Natural killer cell (primary cell): ENCODE measurements at regions of chr20 and their contacts with region 1.

Region 1: GRCh38 chr20:37534401-37535157 is 6.9 kb upstream of the BLCAP start:
- DNase-seq: peak in 1 of 2 donors; percentile 86
- ATAC-seq: peak; percentile 96 to 98 (median 98)
- H3K4me3 ChIP-seq: no peak overlapping the region
- H3K4me3 Mint-ChIP-seq: no peak overlapping the region
- H3K27ac ChIP-seq: no peak overlapping the region
- H3K27ac Mint-ChIP-seq: no peak overlapping the region
- H3K4me1 ChIP-seq: peaks cover 2% of the 10 kb centered on the region
- H3K4me1 Mint-ChIP-seq: peaks cover 6% of the 10 kb centered on the region in 2 donors
- H3K27me3 ChIP-seq: no peaks in the 10 kb centered on the region
- H3K27me3 Mint-ChIP-seq: peaks cover 10 to 12% of the 10 kb centered on the region in 2 donors
- CTCF ChIP-seq: peak; percentile 77

Region 2: GRCh38 chr20:37007898-37008649 is 526.5 kb before region 1 on chr20:
- intact Hi-C with region 1: loop called (anchors 5 kb)
- DNase-seq: peak; percentile 22 to 80
- ATAC-seq: peak; percentile 97 to 99 (median 99)
- H3K4me3 ChIP-seq: no peak overlapping the region
- H3K4me3 Mint-ChIP-seq: no peak overlapping the region
- H3K27ac ChIP-seq: peak overlapping the region; percentile 40
- H3K27ac Mint-ChIP-seq: peak overlapping the region; percentile 82 to 83
- H3K4me1 ChIP-seq: peaks cover 11% of the 10 kb centered on the region
- H3K4me1 Mint-ChIP-seq: peaks cover 8 to 9% of the 10 kb centered on the region in 2 donors
- H3K27me3 ChIP-seq: no peaks in the 10 kb centered on the region
- H3K27me3 Mint-ChIP-seq: no peaks in the 10 kb centered on the region
- CTCF ChIP-seq: peak; percentile 63

Region 3: GRCh38 chr20:37194621-37195417 is 339.8 kb before region 1 on chr20:
- intact Hi-C with region 1: loop called (anchors 1 kb)
- DNase-seq: peak in 1 of 2 donors; percentile 55
- ATAC-seq: no peak
- H3K4me3 ChIP-seq: no peak overlapping the region
- H3K4me3 Mint-ChIP-seq: no peak overlapping the region
- H3K27ac ChIP-seq: no peak overlapping the region
- H3K27ac Mint-ChIP-seq: peak overlapping the region; percentile 13 to 54
- H3K4me1 ChIP-seq: peaks cover 29% of the 10 kb centered on the region
- H3K4me1 Mint-ChIP-seq: peaks cover 61 to 64% of the 10 kb centered on the region in 2 donors
- H3K27me3 ChIP-seq: no peaks in the 10 kb centered on the region
- H3K27me3 Mint-ChIP-seq: no peaks in the 10 kb centered on the region
- CTCF ChIP-seq: no peak

Region 4: DNA sequence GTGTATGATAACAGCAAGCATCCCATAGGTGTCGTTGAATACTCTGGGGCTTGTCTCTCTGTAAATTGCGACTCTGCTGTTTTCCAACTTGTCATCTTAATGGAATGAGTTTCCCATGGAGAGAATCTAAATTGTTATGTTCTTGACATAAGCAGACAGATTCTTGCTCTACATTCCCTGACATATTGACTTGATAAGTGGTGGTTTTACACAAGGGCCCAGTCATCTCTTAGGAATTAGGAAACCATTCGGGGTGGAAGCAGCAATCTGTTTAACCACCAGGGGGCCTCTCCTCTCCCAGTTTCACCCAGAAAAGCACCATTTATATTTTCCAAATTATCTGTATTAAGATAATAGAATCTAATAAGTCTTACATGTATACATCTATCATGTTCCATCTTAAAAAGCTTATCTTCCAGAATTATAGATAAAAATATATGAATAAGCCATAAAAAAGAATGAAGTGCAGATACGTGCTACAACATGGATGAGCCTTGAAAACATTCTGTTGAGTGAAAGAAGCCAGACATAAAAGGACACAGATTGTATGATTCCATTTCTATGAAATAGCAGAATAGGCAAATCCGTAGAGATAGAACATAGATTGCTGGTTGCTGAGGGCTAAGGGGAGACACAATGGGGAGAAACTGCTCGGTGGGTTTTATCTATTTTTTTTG is 332.2 kb before region 1 on chr20:
- intact Hi-C with region 1: loop called (anchors 1 kb)
- DNase-seq: peak in 1 of 2 donors; percentile 59
- ATAC-seq: peak in 1 of 3 donors; percentile 59
- H3K4me3 ChIP-seq: no peak overlapping the region
- H3K4me3 Mint-ChIP-seq: no peak overlapping the region
- H3K27ac ChIP-seq: no peak overlapping the region
- H3K27ac Mint-ChIP-seq: no peak overlapping the region
- H3K4me1 ChIP-seq: no peaks in the 10 kb centered on the region
- H3K4me1 Mint-ChIP-seq: no peaks in the 10 kb centered on the region
- H3K27me3 ChIP-seq: no peaks in the 10 kb centered on the region
- H3K27me3 Mint-ChIP-seq: no peaks in the 10 kb centered on the region
- CTCF ChIP-seq: peak; percentile 68

Region 5: GRCh38 chr20:37270576-37271420 is 263.8 kb before region 1 on chr20:
- intact Hi-C with region 1: loop called (anchors 1 kb)
- DNase-seq: peak in 1 of 2 donors; percentile 17
- ATAC-seq: peak; percentile 29 to 74 (median 48)
- H3K4me3 ChIP-seq: no peak overlapping the region
- H3K4me3 Mint-ChIP-seq: no peak overlapping the region
- H3K27ac ChIP-seq: peak overlapping the region; percentile 39
- H3K27ac Mint-ChIP-seq: peak overlapping the region in 1 of 2 donors; percentile 56
- H3K4me1 ChIP-seq: peaks cover 24% of the 10 kb centered on the region
- H3K4me1 Mint-ChIP-seq: no peaks in the 10 kb centered on the region
- H3K27me3 ChIP-seq: no peaks in the 10 kb centered on the region
- H3K27me3 Mint-ChIP-seq: peaks cover 0 to 5% of the 10 kb centered on the region in 2 donors
- CTCF ChIP-seq: no peak

Region 6: DNA sequence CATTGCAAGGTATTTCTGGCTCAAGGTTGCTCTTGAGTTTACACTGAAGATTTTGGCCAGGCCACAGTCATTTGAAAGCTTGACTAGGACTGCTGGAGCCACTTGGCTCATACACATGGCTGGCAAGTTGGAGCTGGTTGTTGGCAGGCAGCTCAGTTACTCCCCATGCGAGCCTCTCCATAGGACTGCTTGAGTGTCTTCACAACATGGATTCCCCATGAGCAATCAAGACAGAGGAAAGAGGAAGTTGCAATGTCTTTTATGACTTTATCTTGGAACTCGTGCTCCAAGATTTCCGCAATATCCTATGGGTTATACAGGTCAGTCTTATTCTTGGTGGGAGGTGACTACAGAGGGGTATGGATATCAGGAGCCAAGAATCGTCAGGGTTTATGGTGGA is 246.5 kb before region 1 on chr20:
- intact Hi-C with region 1: loop called (anchors 5 kb)
- DNase-seq: no peak
- ATAC-seq: no peak
- H3K4me3 ChIP-seq: no peak overlapping the region
- H3K4me3 Mint-ChIP-seq: peak overlapping the region; percentile 60
- H3K27ac ChIP-seq: no peak overlapping the region
- H3K27ac Mint-ChIP-seq: peak overlapping the region; percentile 90 to 96
- H3K4me1 ChIP-seq: peaks cover 19% of the 10 kb centered on the region
- H3K4me1 Mint-ChIP-seq: peaks cover 10 to 14% of the 10 kb centered on the region in 2 donors
- H3K27me3 ChIP-seq: no peaks in the 10 kb centered on the region
- H3K27me3 Mint-ChIP-seq: peaks cover 0 to 5% of the 10 kb centered on the region in 2 donors
- CTCF ChIP-seq: no peak

Region 7: GRCh38 chr20:37384683-37385174 is 149.8 kb before region 1 on chr20:
- intact Hi-C with region 1: loop called (anchors 1 kb)
- DNase-seq: peak; percentile 82 to 87
- ATAC-seq: peak; percentile 93 to 99 (median 97)
- H3K4me3 ChIP-seq: peak overlapping the region; percentile 44
- H3K4me3 Mint-ChIP-seq: peak overlapping the region; percentile 93
- H3K27ac ChIP-seq: no peak overlapping the region
- H3K27ac Mint-ChIP-seq: peak overlapping the region in 1 of 2 donors; percentile 81
- H3K4me1 ChIP-seq: peaks cover 15% of the 10 kb centered on the region
- H3K4me1 Mint-ChIP-seq: peaks cover 6 to 7% of the 10 kb centered on the region in 2 donors
- H3K27me3 ChIP-seq: no peaks in the 10 kb centered on the region
- H3K27me3 Mint-ChIP-seq: no peaks in the 10 kb centered on the region
- CTCF ChIP-seq: peak; percentile 85